Transverse colon (tissue), 4 donors: ENCODE measurements at regions of chr6 and their contacts with region 1.

Region 1: DNA sequence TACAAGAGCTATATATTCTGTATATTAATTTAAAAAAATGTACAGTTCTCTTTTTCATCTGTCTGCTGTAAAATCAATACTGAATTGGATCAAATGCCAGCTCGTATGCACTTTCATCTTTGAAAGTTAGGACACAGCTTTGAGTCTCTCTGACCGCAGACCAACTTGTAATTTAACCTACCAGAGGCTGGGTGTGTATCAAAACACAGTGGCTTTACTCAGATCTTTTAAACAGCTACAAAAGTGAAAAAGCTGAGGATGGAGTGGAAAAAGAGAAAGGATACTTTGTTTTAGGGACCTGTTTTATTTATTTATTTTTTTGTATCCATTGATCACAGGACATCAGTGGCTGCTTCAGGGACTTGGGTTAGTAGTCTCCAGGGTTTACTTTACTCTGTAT is 44.1 kb downstream of the KIAA0408 start:
- DNase-seq: no peak
- H3K4me3 ChIP-seq: no peak overlapping the region
- H3K27ac ChIP-seq: no peak overlapping the region
- H3K4me1 ChIP-seq: peaks cover 0 to 10% (median under 1%) of the 10 kb centered on the region in 4 donors
- H3K27me3 ChIP-seq: no peaks in the 10 kb centered on the region
- CTCF ChIP-seq: no peak
- EP300 ChIP-seq: no peak
- POLR2A ChIP-seq: no peak

Region 2: DNA sequence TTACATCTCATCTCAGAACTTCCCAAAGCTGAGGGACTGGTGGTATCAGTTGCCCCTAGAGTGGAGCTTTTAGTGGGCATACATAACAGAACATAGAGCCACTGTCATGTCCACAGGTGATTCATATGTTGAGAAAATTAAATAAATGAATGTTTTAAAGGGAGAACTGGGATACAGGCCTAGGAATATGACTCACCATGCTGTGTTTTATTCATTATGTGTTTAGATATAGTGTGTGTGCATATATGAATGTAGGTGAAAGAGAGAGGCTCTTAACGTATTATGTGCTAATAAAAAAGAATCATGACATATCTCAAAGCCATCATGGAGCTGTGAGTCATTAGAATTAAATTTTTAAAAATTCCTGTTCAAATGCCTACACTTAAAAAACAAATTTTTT is 628.8 kb before region 1 on chr6:
- in situ Hi-C with region 1: no loop called
- intact Hi-C with region 1: no loop called
- DNase-seq: no peak
- H3K4me3 ChIP-seq: no peak overlapping the region
- H3K27ac ChIP-seq: no peak overlapping the region
- H3K4me1 ChIP-seq: no peaks in the 10 kb centered on the region
- H3K27me3 ChIP-seq: no peaks in the 10 kb centered on the region
- CTCF ChIP-seq: no peak
- EP300 ChIP-seq: no peak
- POLR2A ChIP-seq: no peak

Region 3: GRCh38 chr6:127317388-127318128 is 97.5 kb before region 1 on chr6:
- in situ Hi-C with region 1: loop called in 2 of 4 experiments (anchors 10 to 25 kb)
- intact Hi-C with region 1: no loop called
- DNase-seq: no peak
- H3K4me3 ChIP-seq: no peak overlapping the region
- H3K27ac ChIP-seq: no peak overlapping the region
- H3K4me1 ChIP-seq: no peaks in the 10 kb centered on the region
- H3K27me3 ChIP-seq: no peaks in the 10 kb centered on the region
- CTCF ChIP-seq: no peak
- EP300 ChIP-seq: no peak
- POLR2A ChIP-seq: no peak

Region 4: GRCh38 chr6:127366281-127367022 is 48.6 kb before region 1 on chr6:
- in situ Hi-C with region 1: no loop called
- intact Hi-C with region 1: loop called (anchors 10 kb)
- DNase-seq: no peak
- H3K4me3 ChIP-seq: no peak overlapping the region
- H3K27ac ChIP-seq: peak overlapping the region in 3 of 4 donors; percentile 33 to 45 (median 39)
- H3K4me1 ChIP-seq: peaks cover 0 to 3% (median 0%) of the 10 kb centered on the region in 4 donors
- H3K27me3 ChIP-seq: no peaks in the 10 kb centered on the region
- CTCF ChIP-seq: no peak
- EP300 ChIP-seq: no peak
- POLR2A ChIP-seq: no peak

Region 5: GRCh38 chr6:127446356-127446755 is 31.3 kb after region 1 on chr6:
- in situ Hi-C with region 1: no loop called
- intact Hi-C with region 1: no loop called
- DNase-seq: no peak
- H3K4me3 ChIP-seq: no peak overlapping the region
- H3K27ac ChIP-seq: no peak overlapping the region
- H3K4me1 ChIP-seq: no peaks in the 10 kb centered on the region
- H3K27me3 ChIP-seq: no peaks in the 10 kb centered on the region
- CTCF ChIP-seq: no peak
- EP300 ChIP-seq: no peak
- POLR2A ChIP-seq: no peak

Region 6: GRCh38 chr6:127484212-127484858 is 69.2 kb after region 1 on chr6:
- in situ Hi-C with region 1: no loop called
- intact Hi-C with region 1: no loop called
- DNase-seq: no peak
- H3K4me3 ChIP-seq: no peak overlapping the region
- H3K27ac ChIP-seq: peak overlapping the region in 2 of 4 donors; percentile 25 to 33
- H3K4me1 ChIP-seq: peaks cover 0 to 18% (median 5%) of the 10 kb centered on the region in 4 donors
- H3K27me3 ChIP-seq: no peaks in the 10 kb centered on the region
- CTCF ChIP-seq: no peak
- EP300 ChIP-seq: no peak
- POLR2A ChIP-seq: no peak